Mammary epithelial cell (primary cell): ENCODE measurements at regions of chr6 and their contacts with region 1.

Region 1: GRCh38 chr6:10434692-10435376 is 20.0 kb upstream of the TFAP2A start:
- DNase-seq: peak; percentile 49
- H3K4me3 ChIP-seq: peak overlapping the region; percentile 15 to 31 (median 19)
- H3K27ac ChIP-seq: peak overlapping the region; percentile 91
- H3K4me1 ChIP-seq: peaks cover 48% of the 10 kb centered on the region
- H3K27me3 ChIP-seq: no peaks in the 10 kb centered on the region
- CTCF ChIP-seq: peak; percentile 54 to 60

Region 2: DNA sequence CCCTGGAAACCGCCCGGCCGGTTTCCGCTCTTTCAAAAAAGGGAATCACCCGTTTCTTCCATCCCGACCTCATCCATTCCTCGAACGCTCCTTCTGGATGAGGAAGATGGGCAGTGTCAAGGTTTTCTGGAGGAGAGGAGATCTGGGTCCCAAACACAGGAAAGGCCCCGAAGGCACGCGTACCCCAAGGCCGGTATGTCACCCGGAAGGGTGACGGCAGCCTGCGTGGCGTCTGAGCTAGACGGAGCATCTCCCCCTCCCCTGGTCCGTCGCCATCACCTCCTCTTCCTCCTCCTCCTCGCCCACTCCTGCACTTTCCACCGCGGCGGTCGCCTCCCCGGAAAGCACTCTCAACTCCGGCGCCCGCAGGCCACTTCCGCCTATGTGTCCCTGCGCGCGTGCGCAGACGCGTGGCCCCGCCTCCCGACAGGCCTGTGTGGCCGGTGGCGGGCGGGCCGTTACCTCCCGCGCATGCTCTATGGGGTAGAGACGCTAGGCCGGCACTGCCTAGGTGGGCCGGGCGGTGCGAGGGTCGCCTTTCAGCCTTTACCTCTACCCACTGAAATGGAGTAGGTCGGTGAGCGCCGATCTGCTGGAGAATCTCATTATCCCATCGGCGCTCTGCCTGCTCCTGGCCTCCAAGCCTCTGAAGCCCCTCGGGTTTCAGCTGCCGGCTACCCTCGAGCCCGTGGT is 1999.5 kb before region 1 on chr6 and contains the start of gene SLC35B3:
- CTCF ChIA-PET with region 1: interaction called, 22 read pairs
- dilution Hi-C with region 1: no loop called
- in situ Hi-C with region 1: no loop called
- intact Hi-C with region 1: no loop called
- DNase-seq: peak; percentile 88
- H3K4me3 ChIP-seq: peak within 1 kb of the TSS; percentile 58 to 90 (median 83)
- H3K27ac ChIP-seq: peak within 1 kb of the TSS; percentile 87
- H3K4me1 ChIP-seq: peaks cover 17% of the 10 kb centered on the region
- H3K27me3 ChIP-seq: no peaks in the 10 kb centered on the region
- CTCF ChIP-seq: no peak
- total RNA-seq, gene SLC35B3: 13.0 to 17.6 TPM

Region 3: GRCh38 chr6:10465629-10466504 is 31.0 kb after region 1 on chr6:
- CTCF ChIA-PET with region 1: interaction called, 7 read pairs
- dilution Hi-C with region 1: no loop called
- in situ Hi-C with region 1: no loop called
- intact Hi-C with region 1: loop called (anchors 1 kb)
- DNase-seq: peak; percentile 36
- H3K4me3 ChIP-seq: no peak overlapping the region
- H3K27ac ChIP-seq: no peak overlapping the region
- H3K4me1 ChIP-seq: no peaks in the 10 kb centered on the region
- H3K27me3 ChIP-seq: no peaks in the 10 kb centered on the region
- CTCF ChIP-seq: peak; percentile 48 to 73